ENCODE measurements at regions of chr19 and their contacts with region 1.

Region 1: GRCh38 chr19:46529622-46530462 is 34.2 kb upstream of the PNMA8B start:
- DNase-seq: peak; percentile 48 to 78
- H3K4me3 ChIP-seq: no peak overlapping the region
- H3K27ac ChIP-seq: no peak overlapping the region
- H3K4me1 ChIP-seq: no peaks in the 10 kb centered on the region
- H3K27me3 ChIP-seq: no peaks in the 10 kb centered on the region
- CTCF ChIP-seq: peak; percentile 87 to 95 (median 94)

Region 2: GRCh38 chr19:46542428-46543230 is 12.8 kb after region 1 on chr19:
- intact Hi-C with region 1: loop called (anchors 1 kb)
- DNase-seq: peak; percentile 62 to 98
- H3K4me3 ChIP-seq: no peak overlapping the region
- H3K27ac ChIP-seq: no peak overlapping the region
- H3K4me1 ChIP-seq: no peaks in the 10 kb centered on the region
- H3K27me3 ChIP-seq: no peaks in the 10 kb centered on the region
- CTCF ChIP-seq: peak; percentile 88 to 93 (median 88)

Region 3: GRCh38 chr19:47243776-47244547 is 714.1 kb after region 1 on chr19:
- intact Hi-C with region 1: no loop called
- DNase-seq: peak in 1 of 2 donors; percentile 97
- H3K4me3 ChIP-seq: peak overlapping the region; percentile 45 to 58
- H3K27ac ChIP-seq: peak overlapping the region; percentile 58 to 64
- H3K4me1 ChIP-seq: peaks cover 27 to 35% of the 10 kb centered on the region in 2 donors
- H3K27me3 ChIP-seq: no peaks in the 10 kb centered on the region
- CTCF ChIP-seq: peak; percentile 98 to 100 (median 99)

Measured in ascending aorta (tissue), 2 donors.